T-cell (primary cell): ENCODE measurements at regions of chr18 and their contacts with region 1.

Region 1: GRCh38 chr18:42404151-42404550 is 449.1 kb downstream of the PIK3C3 start:
- DNase-seq: no peak
- ATAC-seq: no peak
- H3K4me3 ChIP-seq: no peak overlapping the region
- H3K4me3 Mint-ChIP-seq: no peak overlapping the region
- H3K27ac ChIP-seq: no peak overlapping the region
- H3K27ac Mint-ChIP-seq: no peak overlapping the region
- H3K4me1 ChIP-seq: no peaks in the 10 kb centered on the region
- H3K4me1 Mint-ChIP-seq: no peaks in the 10 kb centered on the region
- H3K27me3 ChIP-seq: no peaks in the 10 kb centered on the region
- H3K27me3 Mint-ChIP-seq: no peaks in the 10 kb centered on the region

Region 2: GRCh38 chr18:41875094-41875780 is 528.9 kb before region 1 on chr18:
- CTCF ChIA-PET with region 1: no interaction called
- POLR2A ChIA-PET with region 1: no interaction called
- DNase-seq: no peak
- ATAC-seq: no peak
- H3K4me3 ChIP-seq: no peak overlapping the region
- H3K4me3 Mint-ChIP-seq: no peak overlapping the region
- H3K27ac ChIP-seq: no peak overlapping the region
- H3K27ac Mint-ChIP-seq: no peak overlapping the region
- H3K4me1 ChIP-seq: no peaks in the 10 kb centered on the region
- H3K4me1 Mint-ChIP-seq: no peaks in the 10 kb centered on the region
- H3K27me3 ChIP-seq: no peaks in the 10 kb centered on the region
- H3K27me3 Mint-ChIP-seq: peaks cover 0 to 15% of the 10 kb centered on the region in 2 donors

Region 3: GRCh38 chr18:42339372-42339771 is 64.8 kb before region 1 on chr18:
- CTCF ChIA-PET with region 1: no interaction called
- POLR2A ChIA-PET with region 1: no interaction called
- DNase-seq: no peak
- ATAC-seq: no peak
- H3K4me3 ChIP-seq: no peak overlapping the region
- H3K4me3 Mint-ChIP-seq: no peak overlapping the region
- H3K27ac ChIP-seq: no peak overlapping the region
- H3K27ac Mint-ChIP-seq: no peak overlapping the region
- H3K4me1 ChIP-seq: no peaks in the 10 kb centered on the region
- H3K4me1 Mint-ChIP-seq: no peaks in the 10 kb centered on the region
- H3K27me3 ChIP-seq: no peaks in the 10 kb centered on the region
- H3K27me3 Mint-ChIP-seq: no peaks in the 10 kb centered on the region

Region 4: GRCh38 chr18:42614619-42615293 is 210.6 kb after region 1 on chr18:
- CTCF ChIA-PET with region 1: interaction called in 1 of 2 experiments, 15 read pairs
- POLR2A ChIA-PET with region 1: no interaction called
- DNase-seq: no peak
- ATAC-seq: no peak
- H3K4me3 ChIP-seq: no peak overlapping the region
- H3K4me3 Mint-ChIP-seq: no peak overlapping the region
- H3K27ac ChIP-seq: no peak overlapping the region
- H3K27ac Mint-ChIP-seq: no peak overlapping the region
- H3K4me1 ChIP-seq: no peaks in the 10 kb centered on the region
- H3K4me1 Mint-ChIP-seq: no peaks in the 10 kb centered on the region
- H3K27me3 ChIP-seq: no peaks in the 10 kb centered on the region
- H3K27me3 Mint-ChIP-seq: no peaks in the 10 kb centered on the region